ENCODE measurements at regions of chr2 and their contacts with region 1.

Region 1: DNA sequence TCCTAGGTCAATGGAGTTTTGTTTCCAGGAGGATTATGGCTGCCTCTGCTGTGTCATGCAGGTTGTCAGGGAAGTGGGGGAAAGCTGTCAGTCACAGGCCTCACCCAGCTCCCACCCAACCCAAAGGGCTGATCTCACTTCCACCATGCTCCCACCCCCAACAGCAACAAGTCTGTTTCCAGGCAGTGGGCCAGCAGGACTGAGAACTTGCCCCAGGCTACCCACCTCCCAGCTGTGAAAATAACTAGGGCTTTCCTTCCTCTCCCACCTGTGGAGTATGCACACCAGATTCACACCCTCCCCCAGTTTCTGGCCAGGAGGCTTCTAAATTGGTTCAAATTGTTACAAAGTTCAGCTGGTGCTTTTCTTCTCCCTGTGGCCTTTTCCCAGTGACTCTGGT is 95.6 kb upstream of the ACVR1 start:
- DNase-seq: no peak
- H3K4me3 Mint-ChIP-seq: no peak overlapping the region
- H3K27ac Mint-ChIP-seq: no peak overlapping the region
- H3K4me1 Mint-ChIP-seq: peaks cover 2% of the 10 kb centered on the region
- H3K27me3 Mint-ChIP-seq: peaks cover 6% of the 10 kb centered on the region

Region 2: GRCh38 chr2:157922336-157922735 is 49.4 kb before region 1 on chr2:
- intact Hi-C with region 1: no loop called
- DNase-seq: no peak
- H3K4me3 Mint-ChIP-seq: no peak overlapping the region
- H3K27ac Mint-ChIP-seq: no peak overlapping the region
- H3K4me1 Mint-ChIP-seq: no peaks in the 10 kb centered on the region
- H3K27me3 Mint-ChIP-seq: peaks cover 1% of the 10 kb centered on the region

Region 3: GRCh38 chr2:157938556-157938955 is 33.1 kb before region 1 on chr2:
- intact Hi-C with region 1: loop called (anchors 5 kb)
- DNase-seq: no peak
- H3K4me3 Mint-ChIP-seq: no peak overlapping the region
- H3K27ac Mint-ChIP-seq: no peak overlapping the region
- H3K4me1 Mint-ChIP-seq: peaks cover 1% of the 10 kb centered on the region
- H3K27me3 Mint-ChIP-seq: no peaks in the 10 kb centered on the region